Left cardiac atrium (tissue), 4 donors: ENCODE measurements at regions of chr2 and their contacts with region 1.

Region 1: GRCh38 chr2:85327822-85328617 is at the start of gene TGOLN2:
- DNase-seq: peak; percentile 95
- ATAC-seq: peak; percentile 98 to 99
- total RNA-seq, gene TGOLN2: 71.1 to 73.9 TPM

Region 2: DNA sequence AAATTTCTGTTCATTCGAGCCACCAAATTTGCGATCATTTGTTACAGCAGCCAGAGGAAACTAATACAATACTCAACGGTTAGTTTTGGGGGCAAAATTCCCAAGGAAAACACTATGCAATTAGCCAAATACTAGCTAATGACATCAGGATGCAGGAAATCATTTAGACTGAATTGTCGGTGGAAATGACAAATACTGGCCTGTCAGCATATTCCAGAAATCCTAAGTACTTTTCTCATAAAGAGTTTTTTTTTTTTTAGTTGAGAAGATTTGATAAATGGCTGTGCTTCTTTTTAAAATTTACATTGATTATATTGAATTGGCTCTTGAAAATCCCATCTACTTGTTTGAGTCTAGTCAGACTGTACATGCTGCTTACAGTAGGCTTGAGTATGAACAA is 1279.1 kb before region 1 on chr2:
- intact Hi-C with region 1: no loop called
- DNase-seq: no peak
- ATAC-seq: no peak

Region 3: GRCh38 chr2:85032621-85033020 is 295.4 kb before region 1 on chr2:
- intact Hi-C with region 1: no loop called
- DNase-seq: no peak
- ATAC-seq: no peak

Region 4: DNA sequence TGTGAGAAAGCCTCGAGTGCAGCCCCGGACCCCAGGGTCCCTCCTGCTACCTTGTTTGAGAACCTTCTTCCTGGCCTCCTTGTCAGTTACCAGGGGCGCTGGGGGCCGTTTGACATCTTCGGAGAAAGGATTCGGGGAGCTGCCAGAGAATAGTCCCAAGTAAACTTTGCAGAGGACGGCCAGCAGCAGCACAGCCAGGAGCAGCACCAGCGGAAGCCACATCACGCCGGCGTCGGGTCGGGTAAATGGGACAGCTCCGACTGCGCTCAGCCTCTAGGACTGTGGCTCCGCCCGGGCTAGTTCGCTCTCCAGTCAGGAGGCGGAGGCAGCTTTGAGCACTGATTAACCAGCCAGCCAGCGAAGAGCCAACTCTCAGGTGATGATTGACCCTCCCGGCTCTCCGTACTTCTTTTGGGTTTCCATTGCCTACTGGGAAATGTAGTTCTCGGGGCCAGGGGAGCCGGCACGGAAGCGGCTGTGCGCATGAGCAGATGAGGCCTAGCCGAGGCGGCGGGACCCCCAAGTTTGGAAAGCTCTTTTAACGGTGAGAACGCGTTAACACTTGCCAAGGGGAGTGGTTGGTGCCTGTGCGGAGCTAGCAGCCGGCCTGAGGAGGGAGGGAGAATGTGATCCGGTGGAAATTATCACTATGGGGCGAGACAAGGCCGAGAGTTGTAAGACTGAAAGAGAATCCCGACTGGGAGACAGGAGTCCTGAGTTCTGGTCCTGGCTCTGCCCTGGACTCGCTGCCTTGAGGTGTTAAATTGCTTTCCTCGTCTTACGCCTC is 26.5 kb after region 1 on chr2 and contains the starts of genes ELMOD3 and RETSAT:
- intact Hi-C with region 1: loop called in 1 of 2 experiments (anchors 1 kb)
- DNase-seq: peak; percentile 98
- ATAC-seq: peak; percentile 95 to 97
- total RNA-seq, gene ELMOD3: 15.4 to 22.1 TPM
- total RNA-seq, gene RETSAT: 79.9 to 84.0 TPM

Region 5: DNA sequence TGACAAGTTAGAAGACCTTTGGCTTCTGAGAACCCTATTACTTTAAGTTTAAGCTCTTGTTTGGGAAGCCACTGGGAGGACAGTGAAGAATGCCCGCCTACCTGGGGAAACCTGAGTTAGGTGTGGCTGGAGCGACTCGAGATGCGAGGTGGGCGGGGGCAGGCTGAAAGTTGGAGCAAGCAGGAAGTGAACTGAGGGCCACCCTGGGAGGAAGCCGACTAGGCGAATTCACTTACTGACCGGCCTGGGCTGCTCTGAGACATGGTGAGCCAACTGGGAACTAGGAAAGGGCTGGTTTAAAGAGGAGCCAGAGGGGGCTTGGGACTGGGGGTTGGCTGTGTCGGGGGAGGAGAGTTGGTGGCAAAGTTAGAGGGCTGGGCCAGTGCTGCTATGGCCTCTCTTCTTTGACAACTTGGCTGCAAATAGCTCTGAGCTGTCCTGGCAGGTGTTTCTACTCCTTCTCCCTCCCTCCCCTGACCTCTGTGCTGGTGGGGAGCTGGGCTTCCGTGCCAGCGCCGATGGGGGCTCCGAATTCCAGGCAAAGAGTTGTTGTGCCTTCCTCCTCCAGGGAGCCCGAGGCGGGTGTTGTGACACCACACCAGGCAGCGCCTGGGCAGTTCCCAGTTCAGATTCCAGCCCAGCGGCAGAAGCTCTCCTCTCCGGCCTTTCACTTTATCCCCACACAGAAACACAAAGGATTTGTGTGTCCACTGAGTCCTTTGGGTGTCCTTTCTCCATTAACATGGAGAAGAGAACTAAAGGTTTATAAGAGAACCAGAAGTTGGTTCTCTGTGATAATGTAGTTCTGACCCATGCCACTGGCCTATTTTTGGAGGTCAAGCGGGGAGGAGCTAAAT is 249.6 kb after region 1 on chr2 and contains the start of gene VAMP8:
- intact Hi-C with region 1: no loop called
- DNase-seq: peak; percentile 67
- ATAC-seq: peak; percentile 43 to 69
- total RNA-seq, gene VAMP8: 30.3 to 54.8 TPM

Region 6: GRCh38 chr2:85750587-85751575 is 422.9 kb after region 1 on chr2:
- intact Hi-C with region 1: no loop called
- DNase-seq: peak; percentile 76
- ATAC-seq: peak; percentile 53 to 56